Activated B cell treated with CpG ODN at 0.5 μM for 24 hours (primary cell): ENCODE measurements at regions of chr10 and their contacts with region 1.

Region 1: GRCh38 chr10:60816628-60817397 is 38.5 kb downstream of the CDK1 start:
- DNase-seq: no peak
- ATAC-seq: peak; percentile 79
- H3K4me3 Mint-ChIP-seq: no peak overlapping the region
- H3K27ac Mint-ChIP-seq: no peak overlapping the region
- H3K4me1 Mint-ChIP-seq: peaks cover 9% of the 10 kb centered on the region
- H3K27me3 Mint-ChIP-seq: no peaks in the 10 kb centered on the region
- CTCF ChIP-seq: peak; percentile 90

Region 2: DNA sequence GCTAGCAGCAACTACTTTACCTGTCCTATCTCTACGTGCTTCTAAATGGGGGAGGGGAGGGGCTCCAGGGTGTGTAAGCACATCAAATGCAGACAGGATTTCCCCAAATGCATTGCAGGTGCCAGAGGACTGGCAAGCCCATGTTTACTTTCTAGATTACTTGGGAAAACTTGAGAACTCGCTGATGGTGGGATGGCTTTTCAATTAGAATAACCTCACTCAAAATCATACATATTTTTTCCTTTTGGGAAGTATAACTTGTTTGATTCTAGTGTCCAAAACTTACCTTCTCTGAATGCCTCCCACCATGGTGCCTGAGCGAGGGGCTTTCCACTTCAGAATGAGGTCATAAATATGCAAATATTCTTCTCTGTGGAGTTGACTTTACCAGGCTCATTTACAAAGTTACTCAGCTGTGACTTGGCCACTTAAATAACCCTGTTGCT is 318.5 kb after region 1 on chr10:
- CTCF ChIA-PET with region 1: interaction called, 4 read pairs
- POLR2A ChIA-PET with region 1: no interaction called
- intact Hi-C with region 1: loop called (anchors 5 kb)
- DNase-seq: peak; percentile 19
- ATAC-seq: peak; percentile 94
- H3K4me3 Mint-ChIP-seq: peak overlapping the region; percentile 68
- H3K27ac Mint-ChIP-seq: peak overlapping the region; percentile 91
- H3K4me1 Mint-ChIP-seq: peaks cover 43% of the 10 kb centered on the region
- H3K27me3 Mint-ChIP-seq: no peaks in the 10 kb centered on the region
- CTCF ChIP-seq: no peak

Region 3: GRCh38 chr10:61189912-61190311 is 373.1 kb after region 1 on chr10:
- CTCF ChIA-PET with region 1: no interaction called
- POLR2A ChIA-PET with region 1: no interaction called
- intact Hi-C with region 1: loop called (anchors 1 kb)
- DNase-seq: no peak
- ATAC-seq: no peak
- H3K4me3 Mint-ChIP-seq: no peak overlapping the region
- H3K27ac Mint-ChIP-seq: no peak overlapping the region
- H3K4me1 Mint-ChIP-seq: no peaks in the 10 kb centered on the region
- H3K27me3 Mint-ChIP-seq: peaks cover 3% of the 10 kb centered on the region
- CTCF ChIP-seq: no peak

Region 4: DNA sequence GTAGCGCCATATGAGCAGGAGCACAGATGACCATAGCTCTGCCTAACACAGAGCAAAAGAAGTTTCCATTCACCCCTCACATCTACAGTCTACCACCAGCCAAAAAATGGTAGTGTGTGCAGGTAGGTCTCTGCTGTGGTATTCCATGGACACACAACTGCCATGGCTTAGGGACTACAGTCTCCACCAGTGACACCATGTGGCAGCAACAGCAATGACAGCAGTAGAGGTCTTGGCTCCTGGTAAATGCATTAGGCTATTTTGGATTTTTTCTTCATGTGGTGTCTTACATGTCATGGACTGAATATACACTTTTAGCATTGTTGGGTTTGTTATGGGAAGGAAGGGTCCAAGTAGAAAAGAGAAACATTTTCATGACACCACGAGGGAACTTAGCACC is 775.8 kb after region 1 on chr10:
- CTCF ChIA-PET with region 1: no interaction called
- POLR2A ChIA-PET with region 1: no interaction called
- intact Hi-C with region 1: loop called (anchors 5 kb)
- DNase-seq: no peak
- ATAC-seq: no peak
- H3K4me3 Mint-ChIP-seq: no peak overlapping the region
- H3K27ac Mint-ChIP-seq: no peak overlapping the region
- H3K4me1 Mint-ChIP-seq: peaks cover 8% of the 10 kb centered on the region
- H3K27me3 Mint-ChIP-seq: peaks cover 5% of the 10 kb centered on the region
- CTCF ChIP-seq: no peak

Region 5: DNA sequence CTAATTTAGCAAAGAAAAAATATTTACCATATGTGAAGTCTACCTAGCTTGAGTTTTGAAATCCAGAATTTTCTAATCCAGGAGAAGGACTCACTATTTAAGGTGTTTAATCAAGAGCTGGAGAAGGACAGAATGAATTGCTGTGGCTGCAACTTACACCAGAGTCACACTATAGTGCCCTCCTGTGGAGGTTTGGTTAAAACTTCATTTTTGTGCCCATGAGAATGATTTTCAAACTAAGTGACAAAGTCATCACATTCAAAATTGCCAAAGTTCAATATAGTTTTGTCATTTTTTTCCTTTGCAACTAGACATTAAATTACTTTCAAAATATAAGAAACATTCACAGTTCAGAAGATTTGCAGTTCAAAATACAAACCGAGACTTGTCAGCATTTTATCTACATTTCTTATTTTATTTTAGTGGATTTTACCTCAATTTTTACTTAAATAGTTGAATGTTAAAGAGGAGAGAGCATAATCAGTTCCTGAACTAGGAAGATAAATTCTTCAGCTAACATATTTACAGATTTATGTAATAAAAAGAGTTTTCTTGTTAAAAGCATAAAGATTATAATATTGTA is 916.6 kb after region 1 on chr10:
- CTCF ChIA-PET with region 1: interaction called, 5 read pairs
- POLR2A ChIA-PET with region 1: no interaction called
- intact Hi-C with region 1: loop called (anchors 1 kb)
- DNase-seq: no peak
- ATAC-seq: no peak
- H3K4me3 Mint-ChIP-seq: no peak overlapping the region
- H3K27ac Mint-ChIP-seq: no peak overlapping the region
- H3K4me1 Mint-ChIP-seq: no peaks in the 10 kb centered on the region
- H3K27me3 Mint-ChIP-seq: peaks cover 27% of the 10 kb centered on the region
- CTCF ChIP-seq: no peak

Region 6: GRCh38 chr10:61750929-61751471 is 934.2 kb after region 1 on chr10:
- CTCF ChIA-PET with region 1: no interaction called
- POLR2A ChIA-PET with region 1: no interaction called
- intact Hi-C with region 1: no loop called
- DNase-seq: peak; percentile 47
- ATAC-seq: peak; percentile 97
- H3K4me3 Mint-ChIP-seq: peak overlapping the region; percentile 44
- H3K27ac Mint-ChIP-seq: no peak overlapping the region
- H3K4me1 Mint-ChIP-seq: peaks cover 38% of the 10 kb centered on the region
- H3K27me3 Mint-ChIP-seq: no peaks in the 10 kb centered on the region
- CTCF ChIP-seq: no peak

Region 7: GRCh38 chr10:61835069-61835945 is 1018.5 kb after region 1 on chr10:
- CTCF ChIA-PET with region 1: no interaction called
- POLR2A ChIA-PET with region 1: no interaction called
- intact Hi-C with region 1: loop called (anchors 1 kb)
- DNase-seq: no peak
- ATAC-seq: no peak
- H3K4me3 Mint-ChIP-seq: no peak overlapping the region
- H3K27ac Mint-ChIP-seq: no peak overlapping the region
- H3K4me1 Mint-ChIP-seq: no peaks in the 10 kb centered on the region
- H3K27me3 Mint-ChIP-seq: no peaks in the 10 kb centered on the region
- CTCF ChIP-seq: no peak